Naive thymus-derived CD8-positive, alpha-beta T cell (primary cell): ENCODE measurements at regions of chr17 and their contacts with region 1.

Region 1: DNA sequence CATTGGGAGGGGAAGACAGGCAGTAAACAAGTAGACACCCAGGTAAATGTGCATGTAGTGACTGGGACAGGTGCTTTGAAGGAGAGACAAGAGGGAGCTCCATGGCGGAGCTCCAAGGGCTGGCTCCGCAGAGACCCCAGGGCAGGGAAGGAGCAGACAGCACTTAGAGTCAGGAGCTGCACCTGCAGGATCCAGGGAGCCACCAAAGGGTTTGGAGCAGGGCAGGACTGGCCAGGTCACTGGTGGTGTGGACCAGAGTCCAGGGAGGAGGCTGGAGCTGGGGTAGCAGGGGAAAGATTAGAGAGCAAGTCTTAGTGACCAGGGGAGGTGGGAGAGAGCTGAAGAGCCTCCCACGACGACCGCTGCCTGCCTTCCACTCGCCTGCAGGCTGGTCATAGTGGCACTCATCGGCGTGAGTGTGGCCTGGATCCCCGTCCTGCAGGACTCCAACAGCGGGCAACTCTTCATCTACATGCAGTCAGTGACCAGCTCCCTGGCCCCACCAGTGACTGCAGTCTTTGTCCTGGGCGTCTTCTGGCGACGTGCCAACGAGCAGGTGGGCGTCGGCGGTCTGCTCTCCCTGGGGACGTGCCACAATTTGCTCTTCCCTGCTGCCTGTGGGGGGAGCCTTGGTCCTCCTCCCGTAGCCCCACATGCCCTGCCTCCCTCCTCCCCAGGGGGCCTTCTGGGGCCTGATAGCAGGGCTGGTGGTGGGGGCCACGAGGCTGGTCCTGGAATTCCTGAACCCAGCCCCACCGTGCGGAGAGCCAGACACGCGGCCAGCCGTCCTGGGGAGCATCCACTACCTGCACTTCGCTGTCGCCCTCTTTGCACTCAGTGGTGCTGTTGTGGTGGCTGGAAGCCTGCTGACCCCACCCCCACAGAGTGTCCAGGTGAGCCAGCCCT is 14.7 kb upstream of the FAM83G start:
- DNase-seq: peak in 2 of 10 donors; percentile 8 to 66
- ATAC-seq: no peak
- H3K4me3 Mint-ChIP-seq: no peak overlapping the region
- H3K27ac Mint-ChIP-seq: peak overlapping the region in 9 of 10 donors; percentile 40 to 85 (median 58)
- H3K4me1 Mint-ChIP-seq: peaks cover 20 to 51% (median 35%) of the 10 kb centered on the region in 4 donors
- H3K27me3 Mint-ChIP-seq: no peaks in the 10 kb centered on the region

Region 2: DNA sequence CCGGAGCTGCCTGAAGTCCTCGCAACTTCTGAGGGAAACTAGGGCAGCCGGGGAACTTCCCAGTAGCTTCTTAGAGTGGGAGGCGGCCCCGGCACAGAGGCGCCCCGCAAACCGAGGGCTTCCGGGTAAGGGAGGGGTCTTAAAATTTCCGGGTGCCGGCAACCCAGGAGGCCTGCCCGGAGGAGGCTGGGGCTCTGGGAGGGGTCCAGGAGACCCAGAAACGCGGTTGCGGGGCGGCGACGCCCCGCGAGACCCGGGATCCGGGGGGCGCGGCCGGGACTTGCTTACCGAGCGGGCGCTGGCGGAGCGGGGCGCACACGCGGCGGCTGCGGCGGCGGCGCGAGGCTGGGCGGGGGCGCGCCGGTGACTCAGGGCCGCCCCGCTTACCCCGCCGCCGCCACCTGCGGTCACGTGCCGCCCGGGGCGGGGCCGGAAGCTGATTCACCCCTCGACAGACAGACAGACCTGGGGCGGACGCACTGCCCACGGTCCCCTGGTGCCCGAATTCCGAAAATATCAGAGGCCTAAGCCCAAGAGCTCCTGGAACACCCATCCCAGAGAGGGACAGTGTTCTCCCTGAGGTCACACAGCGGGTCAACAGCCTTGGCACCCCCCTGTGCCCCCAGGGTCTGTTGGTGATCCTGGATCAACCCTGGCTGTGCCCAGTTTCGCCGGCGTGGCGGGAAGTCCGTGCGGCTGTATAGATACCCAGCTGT is 14.7 kb before region 1 on chr17 and contains the start of gene FAM83G:
- POLR2A ChIA-PET with region 1: interaction called, 13 read pairs
- DNase-seq: peak; percentile 61 to 89 (median 76)
- ATAC-seq: peak; percentile 79 to 80
- H3K4me3 Mint-ChIP-seq: peak within 1 kb of the TSS; percentile 79 to 95 (median 88)
- H3K27ac Mint-ChIP-seq: peak within 1 kb of the TSS; percentile 55 to 97 (median 91)
- H3K4me1 Mint-ChIP-seq: peaks cover 11 to 47% (median 40%) of the 10 kb centered on the region in 4 donors
- H3K27me3 Mint-ChIP-seq: no peaks in the 10 kb centered on the region
- polyA plus RNA-seq, gene FAM83G: 1.5 to 3.5 (median 1.9) TPM